ENCODE measurements at regions of chr3 and their contacts with region 1.

Region 1: DNA sequence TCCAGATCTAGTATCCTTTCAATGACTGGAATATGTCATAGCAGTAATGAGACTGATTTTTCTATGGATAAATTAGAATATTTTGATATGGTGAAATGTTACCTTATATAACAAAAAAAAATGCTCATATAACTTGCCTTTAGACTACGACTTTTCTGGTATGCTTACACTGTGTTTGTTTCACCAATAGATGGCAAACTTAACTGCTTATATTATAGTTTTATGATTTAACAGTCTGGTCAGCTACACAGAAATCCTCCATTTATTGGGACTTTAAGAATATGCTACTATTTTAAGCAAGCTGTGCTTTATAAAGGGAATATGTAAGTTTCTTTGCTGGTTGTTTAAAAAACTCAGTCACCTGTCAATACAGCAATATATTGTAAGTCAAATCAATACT is 205.6 kb downstream of the VGLL3 start:
- DNase-seq: no peak

Region 2: GRCh38 chr3:86152620-86153019 is 632.8 kb before region 1 on chr3:
- intact Hi-C with region 1: no loop called
- DNase-seq: no peak

Region 3: DNA sequence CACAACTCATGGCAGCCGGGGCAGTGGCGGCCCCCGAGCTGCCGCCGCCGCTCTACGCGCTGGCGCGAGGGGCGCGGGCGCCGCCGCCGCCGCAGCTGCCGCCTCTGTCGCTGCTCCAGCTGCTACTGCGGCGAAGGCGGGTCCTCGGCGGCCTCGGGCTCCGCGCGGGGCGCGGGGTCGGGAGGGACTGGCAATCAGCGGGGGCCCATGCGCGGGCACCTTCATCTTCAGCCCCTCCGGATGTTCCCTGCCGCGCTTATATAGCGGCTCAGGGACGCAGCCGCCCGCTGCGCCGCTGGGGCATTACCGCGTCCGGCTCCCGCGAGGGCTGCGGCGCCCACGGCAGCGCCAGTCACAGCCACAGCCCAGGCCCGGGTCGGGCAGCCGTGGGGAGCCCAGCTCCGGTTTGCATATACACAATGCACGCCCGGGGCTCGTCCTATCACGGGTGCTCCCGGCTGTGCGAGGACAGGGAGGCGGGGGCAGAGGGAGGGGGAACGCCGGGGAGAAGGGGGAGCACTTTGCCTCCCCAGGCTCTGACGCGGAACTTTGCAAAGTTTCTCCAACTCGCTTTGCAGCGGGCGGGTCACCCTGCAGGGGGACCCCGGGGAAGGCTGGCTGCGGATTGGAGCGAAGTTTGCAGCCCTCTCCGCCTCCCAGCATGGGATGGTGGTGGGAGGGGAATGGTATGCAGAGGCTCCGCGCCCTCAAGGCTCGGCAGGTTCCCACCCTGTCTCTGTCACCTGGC is 205.5 kb after region 1 on chr3 and contains the start of gene VGLL3:
- intact Hi-C with region 1: loop called (anchors 10 kb)
- DNase-seq: peak in 7 of 10 donors; percentile 13 to 86 (median 30)

Measured in posterior cingulate gyrus (tissue), 11 donors.